PC-9 (cell line): ENCODE measurements at regions of chr18 and their contacts with region 1.

Region 1: DNA sequence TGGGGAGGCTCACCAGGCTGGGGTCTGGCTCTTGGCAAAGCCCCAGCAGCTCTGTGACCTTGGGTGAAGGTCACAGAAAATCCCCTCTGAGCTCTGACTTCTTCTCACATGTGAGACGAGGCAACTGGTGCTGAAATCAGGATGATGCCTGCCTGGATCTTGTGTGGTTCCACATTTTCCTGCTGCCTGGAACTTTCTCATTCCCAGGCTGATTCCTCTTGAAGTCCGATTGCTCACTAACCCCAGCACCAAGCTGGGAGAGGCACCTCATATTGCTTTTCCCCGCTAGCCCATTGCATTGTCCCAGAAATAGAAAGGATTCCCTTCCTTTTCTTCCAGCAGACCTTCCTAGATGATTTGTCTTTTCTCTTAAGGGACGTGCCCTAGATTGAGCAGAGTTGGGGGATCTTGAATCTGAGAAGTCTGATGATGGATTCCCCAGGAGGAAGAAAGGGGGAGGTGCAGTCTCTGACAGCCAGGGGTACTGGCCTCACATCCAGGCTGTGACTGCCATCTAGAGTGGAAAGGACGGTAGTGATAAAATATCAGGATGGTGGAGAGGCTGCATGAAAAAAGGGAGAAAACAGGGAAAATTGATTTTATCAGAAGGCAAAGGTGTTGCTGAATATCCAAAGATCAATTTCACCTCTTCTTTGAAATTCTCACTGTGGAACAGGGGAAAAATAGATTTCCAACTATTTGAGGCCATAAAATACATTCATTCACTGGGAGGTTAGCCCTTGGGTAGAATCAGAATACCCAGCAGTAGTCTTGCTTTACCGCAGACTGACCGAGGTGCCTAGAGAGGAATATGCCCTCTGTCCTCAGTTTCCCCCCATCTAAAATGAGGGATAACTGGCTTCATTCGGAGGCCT is 96.3 kb downstream of the FAM210A start:
- DNase-seq: peak; percentile 37 to 50
- H3K4me3 ChIP-seq: no peak overlapping the region
- H3K27ac ChIP-seq: no peak overlapping the region
- H3K4me1 ChIP-seq: no peaks in the 10 kb centered on the region
- H3K27me3 ChIP-seq: peaks cover 62% of the 10 kb centered on the region
- CTCF ChIP-seq: peak; percentile 77

Region 2: DNA sequence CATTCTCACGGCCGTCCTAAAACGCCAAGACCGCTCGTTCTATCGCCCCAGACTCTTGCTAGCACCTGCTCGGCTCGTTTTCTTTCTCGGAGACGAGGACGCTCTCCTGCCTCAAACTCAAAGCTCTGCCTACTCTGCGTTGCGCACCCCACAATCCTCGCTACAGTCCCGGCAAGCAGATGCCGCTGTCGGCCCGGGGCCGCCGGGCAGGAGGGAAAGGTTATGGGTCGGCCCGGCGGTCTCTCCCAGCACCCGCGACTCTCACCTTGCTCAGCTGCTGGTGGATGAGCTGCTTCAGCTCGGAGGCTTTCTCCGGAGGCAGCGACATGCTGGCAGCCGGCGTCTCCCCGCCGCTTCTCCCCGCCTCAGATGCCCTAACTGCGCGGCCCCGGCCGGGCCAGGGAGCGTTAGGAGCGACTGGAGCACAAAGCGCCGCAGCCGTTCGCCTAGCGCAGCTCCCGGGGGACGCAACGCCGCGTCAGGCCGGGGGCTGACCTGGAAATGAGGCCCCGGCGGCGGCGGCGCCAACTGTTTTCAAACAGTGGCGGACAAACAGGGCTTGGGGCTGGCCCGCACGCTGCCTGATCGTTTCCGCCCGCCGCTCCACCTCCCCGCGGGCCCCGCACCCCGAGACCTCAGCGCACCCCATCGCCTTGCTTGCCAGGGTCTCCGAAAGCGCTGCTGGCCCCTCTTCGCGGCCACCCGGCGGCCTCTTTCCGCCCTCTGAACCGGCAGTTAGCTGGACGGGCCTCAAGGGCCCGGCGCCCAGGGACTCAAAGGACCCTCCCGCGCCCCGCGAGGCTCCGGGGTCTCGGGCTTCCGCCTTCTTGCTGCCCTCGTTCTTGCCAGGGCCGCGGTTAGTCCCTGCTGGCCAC is 927.6 kb before region 1 on chr18 and contains the starts of genes CEP76 and PSMG2:
- CTCF ChIA-PET with region 1: no interaction called
- POLR2A ChIA-PET with region 1: interaction called, 17 read pairs
- intact Hi-C with region 1: no loop called
- DNase-seq: peak; percentile 61 to 90
- H3K4me3 ChIP-seq: peak within 1 kb of the TSS; percentile 81
- H3K27ac ChIP-seq: peak within 1 kb of the TSS; percentile 92
- H3K4me1 ChIP-seq: peaks cover 31% of the 10 kb centered on the region
- H3K27me3 ChIP-seq: no peaks in the 10 kb centered on the region
- CTCF ChIP-seq: no peak
- total RNA-seq, gene CEP76: 14.5 and 15.1 TPM in 2 replicates
- total RNA-seq, gene PSMG2: 107 and 123 TPM in 2 replicates

Region 3: DNA sequence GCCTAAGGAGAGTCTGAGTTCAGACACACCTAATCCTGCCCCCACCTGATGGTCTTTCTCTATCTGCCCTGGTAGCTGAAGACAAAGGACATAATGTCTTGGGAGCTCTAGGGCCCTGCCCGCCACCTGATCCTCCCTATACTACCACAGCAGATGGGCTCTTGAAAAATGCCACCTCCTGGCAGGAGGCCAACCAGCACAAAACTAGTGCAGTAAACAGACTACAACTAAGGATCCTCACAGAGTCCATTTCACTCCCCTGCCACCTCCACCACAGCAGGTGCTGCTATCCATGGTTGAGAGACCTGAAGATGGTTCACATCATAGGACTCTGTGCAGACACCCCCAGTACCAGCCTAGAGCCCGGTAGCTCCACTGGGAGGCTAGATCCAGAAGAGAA is 464.1 kb before region 1 on chr18:
- CTCF ChIA-PET with region 1: no interaction called
- POLR2A ChIA-PET with region 1: no interaction called
- intact Hi-C with region 1: loop called (anchors 10 kb)
- DNase-seq: no peak
- H3K4me3 ChIP-seq: no peak overlapping the region
- H3K27ac ChIP-seq: no peak overlapping the region
- H3K4me1 ChIP-seq: no peaks in the 10 kb centered on the region
- H3K27me3 ChIP-seq: peaks cover 23% of the 10 kb centered on the region
- CTCF ChIP-seq: no peak

Region 4: GRCh38 chr18:13216092-13216582 is 413.9 kb before region 1 on chr18:
- CTCF ChIA-PET with region 1: interaction called, 4 read pairs
- POLR2A ChIA-PET with region 1: no interaction called
- intact Hi-C with region 1: loop called (anchors 1 kb)
- DNase-seq: peak in 1 of 2 experiments; percentile 51
- H3K4me3 ChIP-seq: no peak overlapping the region
- H3K27ac ChIP-seq: no peak overlapping the region
- H3K4me1 ChIP-seq: no peaks in the 10 kb centered on the region
- H3K27me3 ChIP-seq: peaks cover 66% of the 10 kb centered on the region
- CTCF ChIP-seq: no peak; the same call in 1 of the 2 replicates

Region 5: DNA sequence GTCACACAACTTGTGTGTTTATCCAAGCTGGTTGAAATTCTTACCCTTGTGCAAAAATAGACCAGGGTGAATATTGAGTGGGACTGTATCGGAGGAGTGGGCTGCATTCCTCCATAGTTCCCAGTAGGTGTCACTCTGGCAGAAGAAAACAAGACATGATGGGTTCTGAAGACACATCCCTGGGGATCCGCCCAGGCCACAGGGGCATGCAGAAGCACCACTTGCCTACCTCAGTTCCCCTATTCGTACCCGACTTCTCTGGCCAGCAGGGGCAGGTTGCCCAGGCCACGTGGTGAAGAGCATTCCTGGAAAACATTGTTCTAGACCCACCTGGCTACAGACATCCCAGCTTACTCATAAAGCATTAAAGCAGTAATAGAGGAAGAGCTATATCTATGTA is 72.0 kb before region 1 on chr18:
- CTCF ChIA-PET with region 1: no interaction called
- POLR2A ChIA-PET with region 1: no interaction called
- intact Hi-C with region 1: loop called (anchors 1 kb)
- DNase-seq: peak in 1 of 2 experiments; percentile 11
- H3K4me3 ChIP-seq: no peak overlapping the region
- H3K27ac ChIP-seq: no peak overlapping the region
- H3K4me1 ChIP-seq: no peaks in the 10 kb centered on the region
- H3K27me3 ChIP-seq: peaks cover 73% of the 10 kb centered on the region
- CTCF ChIP-seq: peak; percentile 61